ENCODE measurements at regions of chr14 and their contacts with region 1.

Region 1: DNA sequence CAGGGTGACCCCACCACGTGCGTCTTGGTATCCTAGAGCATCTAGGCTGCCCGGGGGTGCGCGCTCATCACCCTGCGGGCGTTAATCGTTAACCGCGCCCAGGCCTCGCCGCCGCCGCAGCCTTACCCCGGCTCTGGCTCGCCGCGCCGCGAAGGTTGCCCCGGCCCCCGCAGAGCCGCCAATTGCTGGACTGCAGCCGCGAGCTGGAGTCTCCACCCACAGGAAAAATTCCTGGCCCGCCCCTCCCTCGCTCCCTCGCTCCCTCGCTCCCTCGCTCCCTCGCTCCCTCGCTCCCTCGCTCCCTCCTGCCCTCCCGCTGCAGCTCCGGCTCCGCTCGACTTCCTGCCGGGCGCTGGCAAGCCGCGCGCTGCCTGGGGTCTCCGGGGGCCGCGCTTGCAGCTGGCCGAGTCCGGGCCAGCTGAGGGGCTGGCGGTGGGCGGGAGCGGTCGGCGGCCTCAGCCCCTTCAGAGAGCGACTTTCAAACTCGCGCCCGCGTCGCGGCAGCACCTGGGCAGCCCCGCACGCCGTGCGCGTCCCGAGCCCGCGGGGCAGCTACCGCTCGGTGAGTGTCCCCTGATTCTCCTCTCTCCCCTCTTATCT is at the start of gene PLEKHG3:
- DNase-seq: peak; percentile 87 to 91 (median 89)
- ATAC-seq: peak; percentile 18 to 86 (median 76)
- H3K4me3 ChIP-seq: peak within 1 kb of the TSS; percentile 58 to 90 (median 84)
- H3K27ac ChIP-seq: peak within 1 kb of the TSS; percentile 42 to 92 (median 85)
- H3K4me1 ChIP-seq: peaks cover 0 to 65% (median 32%) of the 10 kb centered on the region in 12 donors
- H3K27me3 ChIP-seq: peaks cover 0 to 18% (median 0%) of the 10 kb centered on the region in 9 donors
- CTCF ChIP-seq: peak in 3 of 12 donors; percentile 26 to 31 (median 27)
- POLR2A ChIP-seq: peak in 1 of 2 donors; percentile 50
- total RNA-seq, gene PLEKHG3: 14.7 to 34.3 (median 18.1) TPM

Region 2: GRCh38 chr14:64369201-64369600 is 335.0 kb before region 1 on chr14:
- intact Hi-C with region 1: no loop called
- DNase-seq: no peak
- ATAC-seq: no peak
- H3K4me3 ChIP-seq: no peak overlapping the region
- H3K27ac ChIP-seq: no peak overlapping the region
- H3K4me1 ChIP-seq: no peaks in the 10 kb centered on the region
- H3K27me3 ChIP-seq: no peaks in the 10 kb centered on the region
- CTCF ChIP-seq: no peak
- POLR2A ChIP-seq: no peak

Region 3: GRCh38 chr14:64531567-64531966 is 172.7 kb before region 1 on chr14:
- intact Hi-C with region 1: no loop called
- DNase-seq: no peak
- ATAC-seq: no peak
- H3K4me3 ChIP-seq: no peak overlapping the region
- H3K27ac ChIP-seq: no peak overlapping the region
- H3K4me1 ChIP-seq: no peaks in the 10 kb centered on the region
- H3K27me3 ChIP-seq: no peaks in the 10 kb centered on the region
- CTCF ChIP-seq: no peak
- POLR2A ChIP-seq: no peak

Region 4: GRCh38 chr14:64645220-64645892 is 58.9 kb before region 1 on chr14:
- intact Hi-C with region 1: no loop called
- DNase-seq: peak in 2 of 5 donors; percentile 32 to 34
- ATAC-seq: peak; percentile 34 to 81 (median 56)
- H3K4me3 ChIP-seq: no peak overlapping the region
- H3K27ac ChIP-seq: peak overlapping the region; percentile 6 to 83 (median 46)
- H3K4me1 ChIP-seq: peaks cover 0 to 17% (median 3%) of the 10 kb centered on the region in 12 donors
- H3K27me3 ChIP-seq: no peaks in the 10 kb centered on the region
- CTCF ChIP-seq: no peak
- POLR2A ChIP-seq: no peak

Region 5: DNA sequence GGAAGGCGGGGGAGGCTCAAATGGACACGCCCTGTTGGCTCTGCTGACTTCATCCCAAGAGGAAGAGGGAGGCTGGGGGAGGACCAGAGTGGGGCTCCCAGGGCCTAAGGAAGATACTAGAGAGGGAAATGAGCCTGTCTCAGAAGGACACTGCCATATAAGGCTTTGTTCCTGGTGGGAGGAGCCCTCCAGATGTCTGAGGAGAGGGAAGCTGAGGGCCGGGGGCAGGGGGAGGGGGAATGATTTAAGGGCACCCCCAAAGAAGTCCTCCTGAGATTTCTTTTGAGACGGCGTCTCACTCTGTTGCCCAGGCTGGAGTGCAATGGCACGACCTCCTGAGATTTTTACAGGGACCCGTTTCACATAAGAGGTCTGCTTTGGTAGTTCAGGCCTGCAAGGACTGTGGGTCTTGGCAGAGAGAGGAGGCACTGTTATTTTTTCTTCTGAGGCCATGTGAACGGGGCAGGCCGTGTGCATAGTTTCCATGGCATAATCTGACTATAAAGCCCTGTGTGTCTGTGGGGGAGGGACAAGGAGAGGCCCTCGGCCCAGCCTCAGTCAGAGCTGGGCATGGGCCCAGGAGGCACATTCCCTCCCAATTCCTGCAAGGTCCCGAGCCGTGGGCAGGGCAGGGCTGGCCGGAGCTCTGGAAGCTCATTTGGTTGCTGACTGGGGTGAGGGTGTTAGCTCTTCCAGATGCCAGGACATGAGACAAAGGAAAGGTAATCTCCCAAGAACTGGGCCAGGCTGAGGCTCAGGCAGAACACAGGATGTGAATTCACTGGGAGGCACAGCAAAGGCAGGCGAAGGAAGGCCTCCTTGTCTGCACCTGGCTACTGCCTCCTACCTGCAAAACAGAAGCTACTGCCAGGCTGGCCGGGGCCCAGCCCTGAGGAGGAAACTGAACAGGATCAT is 22.2 kb before region 1 on chr14:
- intact Hi-C with region 1: loop called in 1 of 10 experiments (anchors 2 kb)
- DNase-seq: peak; percentile 70 to 82 (median 78)
- ATAC-seq: peak; percentile 81 to 96 (median 94)
- H3K4me3 ChIP-seq: no peak overlapping the region
- H3K27ac ChIP-seq: peak overlapping the region; percentile 25 to 92 (median 79)
- H3K4me1 ChIP-seq: peaks cover 0 to 47% (median 20%) of the 10 kb centered on the region in 12 donors
- H3K27me3 ChIP-seq: no peaks in the 10 kb centered on the region
- CTCF ChIP-seq: no peak
- POLR2A ChIP-seq: peak in 1 of 2 donors; percentile 25

Region 6: DNA sequence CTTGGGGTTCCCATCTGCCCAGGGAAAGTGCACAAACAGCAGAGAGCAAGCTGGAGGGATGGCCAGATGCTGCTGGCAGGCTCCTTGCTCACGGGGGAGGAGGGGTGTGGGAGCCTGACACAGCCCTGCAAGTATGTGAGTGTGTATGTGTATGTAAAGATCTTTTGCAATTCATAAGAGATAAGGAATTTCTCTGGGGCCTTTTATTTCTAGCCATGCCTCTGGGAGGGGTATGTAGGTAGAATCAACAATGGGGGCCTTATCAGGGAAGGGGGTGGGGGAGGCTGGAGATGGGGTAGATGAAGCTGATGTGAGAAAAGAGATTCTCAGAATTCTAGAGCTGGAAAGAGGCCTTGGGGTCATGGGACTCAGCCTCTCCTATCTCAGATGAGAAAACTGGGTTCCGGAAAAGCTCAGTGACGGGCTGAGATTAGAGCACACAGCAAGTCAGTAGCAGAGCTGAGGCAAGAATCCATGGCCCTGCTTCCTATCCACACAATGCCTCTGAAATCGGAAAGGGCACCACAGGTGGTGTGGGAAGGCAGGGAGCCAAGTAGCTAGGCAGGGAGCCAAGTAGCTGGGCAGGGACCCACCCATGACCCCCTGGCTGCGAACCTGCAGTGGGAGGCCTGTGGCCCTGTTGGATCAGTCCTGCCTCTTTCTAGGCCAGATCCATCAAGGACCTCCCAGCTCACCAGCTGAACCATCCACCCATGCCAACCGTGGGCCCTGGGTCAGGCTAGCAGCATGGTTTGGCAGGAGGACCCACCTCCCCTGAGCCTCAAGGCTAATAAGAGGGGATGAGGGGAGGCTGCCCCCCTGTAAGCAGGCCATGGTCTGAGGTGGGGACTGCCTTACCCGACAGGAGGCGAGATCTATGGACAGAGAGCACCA is 54.7 kb after region 1 on chr14:
- intact Hi-C with region 1: loop called in 2 of 10 experiments (anchors 5 to 10 kb)
- DNase-seq: peak in 4 of 5 donors; percentile 57 to 73 (median 66)
- ATAC-seq: peak in 3 of 4 donors; percentile 25 to 63 (median 51)
- H3K4me3 ChIP-seq: no peak overlapping the region
- H3K27ac ChIP-seq: peak overlapping the region in 11 of 12 donors; percentile 54 to 87 (median 73)
- H3K4me1 ChIP-seq: peaks cover 0 to 81% (median 69%) of the 10 kb centered on the region in 12 donors
- H3K27me3 ChIP-seq: no peaks in the 10 kb centered on the region
- CTCF ChIP-seq: no peak
- POLR2A ChIP-seq: no peak

Region 7: DNA sequence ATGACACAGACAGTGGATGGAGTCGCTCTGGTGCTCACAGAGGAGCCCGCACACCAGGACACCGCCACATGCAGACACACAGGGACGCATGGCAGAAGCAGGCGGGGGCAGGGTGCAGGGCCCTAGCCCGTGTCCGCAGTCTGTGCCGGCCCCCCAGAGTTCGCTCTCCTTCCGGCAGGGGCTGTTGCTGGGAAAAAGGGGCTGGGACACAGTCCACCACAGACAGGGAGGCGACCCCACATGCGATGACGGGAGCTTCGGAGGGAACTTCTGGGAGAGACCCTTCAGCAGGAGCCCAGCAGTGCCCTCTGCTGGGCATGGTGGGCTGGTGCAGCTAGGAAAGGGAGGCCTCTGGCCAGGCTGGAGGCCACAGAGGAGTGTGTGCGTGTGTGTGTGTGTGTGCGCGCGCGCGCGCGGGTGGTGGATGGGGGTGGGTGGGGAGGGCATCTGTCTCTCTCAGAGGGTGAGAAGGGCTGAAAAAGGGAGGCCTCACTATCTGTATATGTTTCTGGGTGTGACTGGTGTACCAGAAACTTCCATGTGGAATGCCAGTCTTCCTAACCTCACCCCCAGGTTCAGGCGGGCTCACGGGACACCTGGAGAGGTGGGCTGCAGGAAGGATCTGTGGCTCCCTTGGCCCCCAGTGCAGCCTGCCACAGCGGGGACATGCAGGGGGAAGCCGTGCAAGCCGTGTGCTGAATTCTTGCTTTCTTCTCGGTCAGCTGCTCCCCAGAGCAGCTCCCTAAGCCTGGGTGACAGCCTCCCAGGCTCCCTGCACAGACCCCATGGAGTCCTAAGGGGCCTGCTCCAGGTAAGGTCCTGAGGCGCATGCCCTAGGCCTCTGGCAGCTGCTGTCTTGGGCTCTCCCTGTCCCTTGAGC is 60.6 kb after region 1 on chr14:
- intact Hi-C with region 1: loop called in 1 of 10 experiments (anchors 5 kb)
- DNase-seq: peak; percentile 68 to 83 (median 74)
- ATAC-seq: peak in 3 of 4 donors; percentile 54 to 66 (median 65)
- H3K4me3 ChIP-seq: peak overlapping the region in 7 of 12 donors; percentile 27 to 45 (median 33)
- H3K27ac ChIP-seq: peak overlapping the region in 9 of 12 donors; percentile 16 to 87 (median 78)
- H3K4me1 ChIP-seq: peaks cover 0 to 48% (median 39%) of the 10 kb centered on the region in 12 donors
- H3K27me3 ChIP-seq: no peaks in the 10 kb centered on the region
- CTCF ChIP-seq: peak; percentile 68 to 95 (median 86)
- POLR2A ChIP-seq: no peak

Region 8: DNA sequence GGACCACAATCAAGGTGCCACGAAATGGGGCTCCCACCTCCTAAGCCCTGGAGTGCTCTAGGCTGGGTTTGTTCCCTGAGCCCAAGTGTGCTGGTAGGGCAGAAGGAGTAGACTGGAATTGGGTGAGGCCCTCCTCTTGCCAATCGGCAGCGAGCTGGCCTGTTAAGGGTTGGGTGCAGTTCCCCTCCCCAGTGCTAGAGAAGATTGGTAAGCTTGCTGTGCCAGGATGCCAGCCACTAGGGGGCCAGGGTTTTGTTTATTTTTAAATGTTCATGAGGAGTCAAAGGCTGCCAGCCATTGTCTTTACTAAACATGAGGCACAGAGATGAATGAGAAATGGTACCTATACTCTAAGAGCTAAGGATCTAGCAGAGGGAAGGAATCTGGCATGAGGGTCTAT is 95.8 kb after region 1 on chr14:
- intact Hi-C with region 1: no loop called
- DNase-seq: peak in 4 of 5 donors; percentile 41 to 67 (median 50)
- ATAC-seq: peak; percentile 44 to 72 (median 63)
- H3K4me3 ChIP-seq: no peak overlapping the region
- H3K27ac ChIP-seq: no peak overlapping the region
- H3K4me1 ChIP-seq: peaks cover 0 to 7% (median 0%) of the 10 kb centered on the region in 12 donors
- H3K27me3 ChIP-seq: no peaks in the 10 kb centered on the region
- CTCF ChIP-seq: peak; percentile 29 to 63 (median 50)
- POLR2A ChIP-seq: no peak

Measured in heart left ventricle (tissue), 16 donors.